HEK293 (cell line): ENCODE measurements at regions of chr1 and their contacts with region 1.

Region 1: DNA sequence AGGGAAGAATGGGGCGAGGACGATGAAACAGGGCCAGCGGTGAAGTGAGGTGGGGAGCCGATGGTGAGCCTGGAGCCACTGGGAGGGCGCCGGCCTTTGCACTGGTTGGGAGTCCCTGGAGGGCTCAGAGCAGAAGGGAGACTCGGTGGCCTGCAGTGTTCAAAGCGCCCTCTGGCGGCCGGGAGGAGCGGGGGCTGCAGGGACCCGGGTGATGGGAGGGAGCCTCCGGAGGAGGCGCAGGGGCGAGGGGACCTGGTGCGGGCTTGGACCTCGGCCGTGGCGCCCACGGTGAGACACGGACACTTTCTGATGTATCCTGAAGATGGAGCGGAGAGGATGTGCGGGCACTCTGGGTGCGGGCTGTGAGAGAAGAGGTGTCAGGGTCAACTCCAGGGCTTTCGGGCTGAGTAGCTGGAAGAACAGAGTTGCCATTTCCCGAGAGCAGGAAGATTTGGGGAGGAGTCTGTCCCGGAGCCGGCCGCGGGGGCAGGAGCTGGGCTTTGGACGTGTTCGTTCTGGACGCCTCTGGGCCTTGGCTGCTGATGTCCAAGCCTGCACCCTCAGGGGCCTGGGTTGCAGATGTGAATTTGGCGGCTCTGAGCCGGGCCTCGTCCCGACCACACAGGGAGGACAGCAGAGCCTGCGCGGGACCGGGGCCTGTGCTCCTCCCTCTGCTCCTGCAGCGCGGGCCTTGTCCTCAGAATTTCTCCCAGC is 29.7 kb downstream of the HEYL start:
- H3K4me3 ChIP-seq: no peak overlapping the region
- H3K27ac ChIP-seq: no peak overlapping the region
- H3K4me1 ChIP-seq: no peaks in the 10 kb centered on the region
- CTCF ChIP-seq: peak; percentile 81; the same call in 1 of the 2 replicates

Region 2: GRCh38 chr1:39282537-39283216 is 327.1 kb before region 1 on chr1:
- CTCF ChIA-PET with region 1: no interaction called
- POLR2A ChIA-PET with region 1: no interaction called
- H3K4me3 ChIP-seq: no peak overlapping the region
- H3K27ac ChIP-seq: no peak overlapping the region
- H3K4me1 ChIP-seq: no peaks in the 10 kb centered on the region
- CTCF ChIP-seq: no peak

Region 3: DNA sequence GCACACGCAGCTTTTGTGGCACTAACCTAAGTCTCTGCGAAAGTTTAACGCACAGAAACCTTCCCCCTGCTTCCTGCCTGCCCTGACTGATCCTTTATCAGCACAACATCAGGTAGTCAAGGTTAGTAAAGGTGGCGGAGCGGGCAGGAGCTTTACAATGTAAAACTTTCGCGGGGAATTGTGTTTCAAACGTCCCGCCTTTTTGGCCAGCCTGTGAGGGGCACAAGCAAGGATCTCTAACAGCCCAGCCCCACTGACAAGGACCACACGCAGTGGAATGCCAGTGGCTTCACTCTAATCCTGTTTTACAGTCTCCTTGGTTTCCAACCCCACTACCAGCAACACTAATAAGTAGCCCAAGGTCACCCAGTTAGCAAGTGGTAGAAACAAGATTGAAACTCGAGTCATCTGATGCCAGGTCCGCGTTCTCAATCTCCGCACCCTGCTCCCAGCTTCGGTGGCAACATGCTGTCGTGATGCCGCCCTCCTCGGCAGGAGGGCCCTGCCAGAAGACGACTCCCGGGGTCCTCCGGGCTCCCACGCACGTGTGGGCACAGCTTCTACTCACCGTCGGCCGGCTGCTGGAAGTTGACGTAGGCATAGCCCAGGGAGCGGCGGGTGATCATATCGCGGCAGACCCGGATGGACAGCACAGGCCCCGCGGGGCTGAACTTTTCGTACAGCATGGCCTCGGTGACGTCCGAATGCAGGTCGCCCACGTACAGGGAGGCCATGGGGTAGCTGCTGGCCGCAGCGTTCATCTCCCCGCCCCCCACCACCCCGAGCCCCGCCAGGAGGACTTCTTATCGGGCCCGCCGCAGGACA is 34.4 kb before region 1 on chr1:
- CTCF ChIA-PET with region 1: interaction called, 10 read pairs
- POLR2A ChIA-PET with region 1: interaction called, 3 read pairs
- H3K4me3 ChIP-seq: peak overlapping the region; percentile 76
- H3K27ac ChIP-seq: peak overlapping the region; percentile 75
- H3K4me1 ChIP-seq: 0 out of 2 replicates have a peak, but pooled peaks cover 3% of the 10 kb centered on the region
- CTCF ChIP-seq: no peak

Region 4: GRCh38 chr1:39623053-39623452 is 13.3 kb after region 1 on chr1:
- CTCF ChIA-PET with region 1: interaction called, 19 read pairs
- POLR2A ChIA-PET with region 1: interaction called, 4 read pairs
- H3K4me3 ChIP-seq: no peak overlapping the region
- H3K27ac ChIP-seq: no peak overlapping the region
- H3K4me1 ChIP-seq: no peaks in the 10 kb centered on the region
- CTCF ChIP-seq: no peak

Region 5: DNA sequence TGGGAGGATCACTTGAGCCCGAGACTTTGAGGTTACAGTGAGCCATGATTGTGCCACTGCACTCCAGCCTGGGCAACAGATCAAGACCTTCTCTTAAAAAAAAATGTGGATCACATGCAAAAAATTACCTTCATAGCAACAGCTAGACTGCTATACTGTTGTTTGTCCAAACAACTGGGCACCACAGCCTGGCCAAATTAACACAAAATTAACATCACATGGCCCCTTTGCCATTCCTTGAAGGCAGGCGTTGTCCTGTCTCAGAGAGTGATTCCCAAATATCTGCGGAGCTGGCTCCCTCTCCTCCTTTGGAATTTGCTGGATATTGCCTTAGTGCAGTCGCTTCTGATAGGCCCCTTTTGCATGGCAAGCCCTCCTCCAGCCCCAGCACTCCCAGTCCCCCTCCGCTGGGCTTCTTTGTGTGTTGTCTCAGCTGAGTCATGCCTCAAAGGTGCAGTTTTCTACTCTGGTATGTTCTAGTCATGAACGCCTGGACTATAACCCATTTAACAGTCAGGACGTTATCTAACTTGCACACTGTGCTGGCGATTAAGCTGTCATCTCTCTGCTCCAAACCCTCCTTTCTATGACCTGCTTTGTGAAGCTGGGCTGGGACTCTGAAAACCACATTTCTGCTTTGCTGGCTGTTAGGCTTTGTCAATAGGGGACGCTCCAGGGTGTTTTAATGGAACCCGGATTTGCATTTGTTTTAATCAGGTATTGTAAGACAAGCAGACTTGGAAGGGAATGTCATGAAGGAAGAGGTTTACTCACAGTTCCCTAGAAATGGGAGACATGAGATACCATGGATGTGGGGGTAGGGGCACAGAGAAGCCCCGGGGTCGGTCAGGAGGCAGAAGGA is 101.6 kb after region 1 on chr1:
- CTCF ChIA-PET with region 1: interaction called, 10 read pairs
- POLR2A ChIA-PET with region 1: interaction called, 3 read pairs
- H3K4me3 ChIP-seq: no peak overlapping the region
- H3K27ac ChIP-seq: no peak overlapping the region
- H3K4me1 ChIP-seq: no peaks in the 10 kb centered on the region
- CTCF ChIP-seq: no peak

Region 6: DNA sequence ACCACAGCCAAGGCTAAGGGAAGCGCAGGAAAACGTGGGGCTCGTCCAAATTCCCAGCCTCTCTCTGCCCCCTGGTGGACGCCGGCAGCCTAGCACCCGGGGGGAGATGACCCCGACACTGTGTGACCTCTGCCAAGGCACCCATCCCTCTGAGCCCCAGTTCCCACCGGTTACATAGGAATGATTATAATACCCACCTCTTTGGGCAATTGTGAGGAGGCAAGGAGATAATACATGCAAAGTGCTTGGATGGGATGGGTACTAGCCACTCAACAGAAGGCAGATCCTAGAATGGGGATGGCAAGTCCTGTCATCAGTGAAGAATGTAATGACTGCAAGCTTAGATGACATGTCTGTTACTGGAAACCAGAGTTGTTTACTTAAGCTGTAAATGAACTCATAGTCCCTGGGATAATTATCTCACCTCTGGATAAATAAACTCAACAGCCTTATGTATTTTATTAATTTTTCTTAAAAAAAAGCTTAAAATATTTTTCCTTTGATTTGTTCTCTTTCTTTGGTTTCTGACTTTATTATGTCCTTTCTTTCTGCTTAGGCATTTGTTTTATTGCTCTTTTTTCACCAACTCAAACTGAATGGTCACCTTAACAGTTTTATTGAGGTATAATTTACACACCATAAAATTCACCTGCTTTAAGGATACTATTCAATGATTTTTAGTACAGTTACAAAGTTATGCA is 190.1 kb after region 1 on chr1:
- CTCF ChIA-PET with region 1: interaction called, 11 read pairs
- POLR2A ChIA-PET with region 1: no interaction called
- H3K4me3 ChIP-seq: no peak overlapping the region
- H3K27ac ChIP-seq: no peak overlapping the region
- H3K4me1 ChIP-seq: no peaks in the 10 kb centered on the region
- CTCF ChIP-seq: peak; percentile 73